Activated CD8-positive, alpha-beta T cell treated with anti-CD3 and anti-CD28 coated beads for 36 hours (primary cell): ENCODE measurements at regions of chr1 and their contacts with region 1.

Region 1: GRCh38 chr1:167687919-167688519 is 33.8 kb upstream of the MPZL1 start:
- DNase-seq: peak; percentile 90
- ATAC-seq: peak; percentile 84
- H3K4me3 Mint-ChIP-seq: no peak overlapping the region
- H3K27ac Mint-ChIP-seq: peak overlapping the region; percentile 74
- H3K4me1 Mint-ChIP-seq: peaks cover 22% of the 10 kb centered on the region
- H3K27me3 Mint-ChIP-seq: no peaks in the 10 kb centered on the region
- CTCF ChIP-seq: peak; percentile 94

Region 2: DNA sequence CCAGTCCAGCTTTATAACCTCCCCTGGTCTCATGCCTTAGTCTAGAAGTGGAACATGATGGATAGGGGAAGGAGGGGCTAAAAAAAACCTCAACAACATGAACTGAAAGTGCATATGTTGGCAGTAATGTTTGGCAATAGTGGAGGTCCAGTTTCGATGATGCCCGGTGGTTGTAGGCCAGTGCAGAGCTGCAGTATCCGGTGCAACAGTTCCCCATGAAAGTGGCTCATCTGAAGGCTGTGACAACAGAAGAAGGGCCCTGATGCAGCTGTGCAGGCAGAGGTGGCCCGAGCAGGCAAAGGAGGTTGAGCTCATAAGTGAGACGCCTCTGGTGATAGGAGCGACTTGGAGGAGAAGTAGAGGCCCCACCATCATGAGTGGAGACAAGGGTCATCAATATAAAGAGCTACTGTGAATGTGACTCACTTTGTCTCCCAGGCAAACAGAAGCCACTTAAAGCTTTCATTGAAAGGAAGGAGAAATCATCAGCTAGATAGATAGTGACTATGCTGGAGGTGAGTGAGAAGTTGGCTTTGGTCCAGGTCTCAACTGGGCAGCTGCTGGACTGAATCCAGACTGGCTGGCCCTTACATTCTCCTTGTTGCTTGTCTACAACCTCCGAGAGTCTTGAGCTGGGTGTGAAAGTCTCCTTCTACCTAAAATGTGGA is 124.3 kb before region 1 on chr1:
- CTCF ChIA-PET with region 1: interaction called, 27 read pairs
- POLR2A ChIA-PET with region 1: no interaction called
- intact Hi-C with region 1: no loop called
- DNase-seq: no peak
- ATAC-seq: no peak
- H3K4me3 Mint-ChIP-seq: no peak overlapping the region
- H3K27ac Mint-ChIP-seq: peak overlapping the region; percentile 32
- H3K4me1 Mint-ChIP-seq: peaks cover 3% of the 10 kb centered on the region
- H3K27me3 Mint-ChIP-seq: no peaks in the 10 kb centered on the region
- CTCF ChIP-seq: no peak

Region 3: DNA sequence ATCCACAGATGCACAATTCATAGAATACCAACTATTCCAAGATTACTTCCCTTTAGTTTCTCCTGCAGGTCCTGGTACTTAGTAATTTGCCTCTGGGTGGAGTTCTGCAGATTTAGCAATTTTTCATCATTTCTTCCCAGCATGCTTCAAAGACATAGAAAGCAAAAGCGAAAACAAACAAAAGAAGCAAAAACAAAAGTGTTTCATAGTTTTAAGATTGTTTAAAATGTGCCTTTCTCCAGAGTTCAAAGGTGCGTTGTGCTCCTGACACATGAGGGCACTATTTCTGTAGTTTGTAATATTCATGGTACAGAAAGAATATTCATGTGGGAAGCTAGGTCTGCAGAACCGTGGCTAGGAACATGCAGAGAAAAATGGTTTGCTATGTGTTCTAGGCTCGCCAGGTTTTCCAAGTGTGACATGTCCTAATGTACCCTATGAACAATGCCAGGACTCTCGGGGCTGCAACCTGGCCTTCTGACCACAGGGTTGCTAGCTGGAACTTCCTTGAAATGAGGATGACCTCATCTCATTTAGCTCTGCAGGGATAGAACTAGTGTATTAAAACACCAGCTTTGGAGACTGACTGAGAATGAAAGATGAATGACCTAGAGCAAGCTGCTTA is 88.0 kb before region 1 on chr1:
- CTCF ChIA-PET with region 1: interaction called, 155 read pairs
- POLR2A ChIA-PET with region 1: interaction called, 9 read pairs
- intact Hi-C with region 1: loop called (anchors 1 kb)
- DNase-seq: peak; percentile 66
- ATAC-seq: peak; percentile 77
- H3K4me3 Mint-ChIP-seq: peak overlapping the region; percentile 54
- H3K27ac Mint-ChIP-seq: peak overlapping the region; percentile 77
- H3K4me1 Mint-ChIP-seq: peaks cover 41% of the 10 kb centered on the region
- H3K27me3 Mint-ChIP-seq: no peaks in the 10 kb centered on the region
- CTCF ChIP-seq: peak; percentile 62

Region 4: GRCh38 chr1:167635156-167635648 is 52.8 kb before region 1 on chr1:
- CTCF ChIA-PET with region 1: interaction called, 27 read pairs
- POLR2A ChIA-PET with region 1: interaction called, 3 read pairs
- intact Hi-C with region 1: loop called (anchors 5 kb)
- DNase-seq: no peak
- ATAC-seq: no peak
- H3K4me3 Mint-ChIP-seq: no peak overlapping the region
- H3K27ac Mint-ChIP-seq: peak overlapping the region; percentile 98
- H3K4me1 Mint-ChIP-seq: peaks cover 76% of the 10 kb centered on the region
- H3K27me3 Mint-ChIP-seq: no peaks in the 10 kb centered on the region
- CTCF ChIP-seq: no peak

Region 5: DNA sequence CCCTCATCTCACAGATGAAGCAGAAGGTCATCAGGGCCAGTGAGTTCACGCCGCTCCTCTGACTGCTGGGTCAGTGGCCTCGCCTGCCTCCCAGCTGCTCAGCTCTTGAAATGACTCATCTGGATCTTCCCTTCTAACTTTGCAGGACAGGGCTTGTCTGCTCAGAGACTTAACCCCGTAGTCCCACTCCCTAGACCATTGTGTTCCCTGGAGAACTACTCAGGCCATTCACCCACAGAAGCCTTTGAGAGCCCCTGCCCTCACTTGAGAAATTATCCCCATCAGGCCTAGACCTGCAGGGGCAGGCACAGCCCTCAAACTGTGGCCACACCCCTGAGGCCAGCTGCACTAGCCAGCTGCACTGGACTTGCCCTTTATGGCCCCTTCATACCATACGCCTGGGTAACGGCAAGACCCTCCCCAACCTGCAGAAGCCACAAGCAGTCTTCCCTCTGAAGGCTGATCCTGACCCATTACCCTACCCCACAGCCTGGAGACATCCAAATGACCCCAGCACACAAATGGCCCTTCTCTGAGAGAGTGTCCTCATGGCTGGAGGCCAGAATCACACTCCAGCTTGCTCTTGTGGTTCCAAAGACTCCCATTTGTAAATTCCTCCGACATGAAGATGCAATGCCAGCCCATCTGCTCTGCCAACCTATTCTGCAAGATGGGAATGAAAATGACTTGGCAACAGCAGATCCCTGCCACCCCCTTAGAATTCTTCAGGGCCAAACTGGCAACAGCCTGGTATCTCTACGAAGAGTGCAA is 24.8 kb before region 1 on chr1:
- CTCF ChIA-PET with region 1: interaction called, 17 read pairs
- POLR2A ChIA-PET with region 1: interaction called, 3 read pairs
- intact Hi-C with region 1: no loop called
- DNase-seq: no peak
- ATAC-seq: no peak
- H3K4me3 Mint-ChIP-seq: no peak overlapping the region
- H3K27ac Mint-ChIP-seq: peak overlapping the region; percentile 36
- H3K4me1 Mint-ChIP-seq: peaks cover 80% of the 10 kb centered on the region
- H3K27me3 Mint-ChIP-seq: no peaks in the 10 kb centered on the region
- CTCF ChIP-seq: no peak

Region 6: DNA sequence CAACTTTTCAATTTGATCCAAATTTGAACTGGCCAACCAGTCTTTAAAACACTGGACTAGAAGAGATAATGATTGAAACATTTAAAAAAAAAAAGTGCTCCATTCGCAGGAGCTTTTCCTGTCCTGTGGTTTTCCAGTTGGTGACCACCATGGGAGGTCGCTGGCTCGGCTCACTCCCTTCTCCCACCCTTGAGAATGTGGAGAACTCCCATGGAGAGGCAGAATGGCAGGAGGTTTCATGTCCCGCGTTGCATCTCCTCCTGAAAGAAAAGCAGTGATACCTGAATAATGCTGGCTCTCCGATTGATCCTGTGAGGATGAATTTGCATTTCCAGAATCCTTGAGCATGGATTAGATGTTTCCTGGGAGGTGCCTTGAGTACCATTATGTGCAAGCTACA is 17.2 kb after region 1 on chr1:
- CTCF ChIA-PET with region 1: interaction called, 15 read pairs
- POLR2A ChIA-PET with region 1: interaction called, 4 read pairs
- intact Hi-C with region 1: no loop called
- DNase-seq: no peak
- ATAC-seq: no peak
- H3K4me3 Mint-ChIP-seq: no peak overlapping the region
- H3K27ac Mint-ChIP-seq: peak overlapping the region; percentile 16
- H3K4me1 Mint-ChIP-seq: peaks cover 11% of the 10 kb centered on the region
- H3K27me3 Mint-ChIP-seq: no peaks in the 10 kb centered on the region
- CTCF ChIP-seq: no peak

Region 7: DNA sequence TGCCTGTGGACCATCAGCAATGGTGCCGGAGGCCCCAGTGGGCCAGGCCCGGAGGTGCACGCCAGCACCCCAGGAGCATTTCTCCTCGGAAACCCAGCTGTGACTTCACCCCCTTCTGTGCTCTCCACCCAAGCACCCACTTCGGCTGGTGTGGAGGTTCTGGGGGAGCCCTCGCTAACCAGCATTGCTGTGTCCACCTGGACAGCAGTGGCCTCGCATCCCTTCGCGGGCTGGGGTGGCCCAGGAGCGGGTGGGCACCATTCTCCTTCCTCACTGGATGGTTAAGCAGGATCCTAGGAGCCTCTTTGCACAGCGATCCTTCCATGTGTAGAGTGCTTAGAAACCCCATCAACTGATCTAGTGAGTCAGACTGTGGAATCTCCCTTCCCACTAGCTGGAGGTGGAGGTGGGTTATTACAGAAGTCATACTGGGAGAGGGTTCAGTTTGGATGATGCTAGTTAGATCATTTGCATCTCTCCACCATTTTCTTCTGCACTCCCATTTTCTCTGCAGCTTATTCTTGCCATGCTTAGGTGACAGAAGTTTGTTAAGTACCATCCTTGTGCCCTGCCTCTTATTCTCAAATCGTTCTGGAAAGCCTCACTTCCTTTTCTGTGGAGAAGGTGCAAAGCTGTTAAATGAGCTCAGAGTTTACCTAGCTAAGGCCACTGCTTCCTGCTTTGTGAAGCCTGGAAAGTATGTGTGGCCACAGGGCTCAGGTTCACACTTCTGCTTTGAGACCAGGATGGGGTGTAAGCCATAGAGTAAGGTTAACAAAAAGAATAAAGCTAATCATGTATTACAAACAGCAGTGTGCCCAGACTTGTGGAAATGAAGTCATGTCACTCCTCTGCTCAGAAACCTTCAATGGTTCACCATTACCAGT is 624.9 kb after region 1 on chr1:
- CTCF ChIA-PET with region 1: no interaction called
- POLR2A ChIA-PET with region 1: no interaction called
- intact Hi-C with region 1: no loop called
- DNase-seq: peak; percentile 14
- ATAC-seq: peak; percentile 37
- H3K4me3 Mint-ChIP-seq: no peak overlapping the region
- H3K27ac Mint-ChIP-seq: no peak overlapping the region
- H3K4me1 Mint-ChIP-seq: peaks cover 6% of the 10 kb centered on the region
- H3K27me3 Mint-ChIP-seq: no peaks in the 10 kb centered on the region
- CTCF ChIP-seq: no peak